Heart left ventricle (tissue), 16 donors: ENCODE measurements at regions of chr7 and their contacts with region 1.

Region 1: GRCh38 chr7:18119985-18120384 is 92.3 kb upstream of the PRPS1L1 start:
- DNase-seq: peak in 1 of 5 donors; percentile 25
- ATAC-seq: peak in 3 of 4 donors; percentile 71 to 76 (median 72)
- H3K4me3 ChIP-seq: no peak overlapping the region
- H3K27ac ChIP-seq: no peak overlapping the region
- H3K4me1 ChIP-seq: peaks cover 0 to 6% (median 0%) of the 10 kb centered on the region in 12 donors
- H3K27me3 ChIP-seq: no peaks in the 10 kb centered on the region
- CTCF ChIP-seq: peak in 10 of 12 donors; percentile 6 to 44 (median 27)
- POLR2A ChIP-seq: no peak

Region 2: DNA sequence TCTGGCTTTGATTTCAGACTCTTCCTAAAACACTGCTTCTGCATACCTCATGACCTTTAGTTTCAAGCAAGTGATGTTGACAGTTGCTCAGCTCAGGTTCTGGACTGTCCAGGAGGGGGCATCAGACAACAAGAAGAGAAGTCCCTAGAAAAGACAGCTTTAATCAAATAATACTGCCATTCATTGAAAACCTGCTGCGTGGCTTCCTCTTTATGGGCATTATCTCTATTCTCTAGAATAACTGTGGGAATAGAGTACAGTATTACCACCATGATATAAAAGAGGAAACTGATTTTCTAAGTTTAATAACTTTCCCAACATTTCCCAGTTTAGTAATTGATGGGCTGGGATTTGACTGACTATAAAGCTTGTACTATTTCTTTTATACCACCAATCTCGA is 350.1 kb before region 1 on chr7:
- intact Hi-C with region 1: loop called in 1 of 10 experiments (anchors 10 kb)
- DNase-seq: peak; percentile 28 to 55 (median 44)
- ATAC-seq: peak in 3 of 4 donors; percentile 57 to 66 (median 58)
- H3K4me3 ChIP-seq: no peak overlapping the region
- H3K27ac ChIP-seq: peak overlapping the region in 1 of 12 donors; percentile 46
- H3K4me1 ChIP-seq: peaks cover 0 to 39% (median 9%) of the 10 kb centered on the region in 12 donors
- H3K27me3 ChIP-seq: no peaks in the 10 kb centered on the region
- CTCF ChIP-seq: peak; percentile 46 to 74 (median 68)
- POLR2A ChIP-seq: no peak

Region 3: GRCh38 chr7:17957871-17958270 is 162.1 kb before region 1 on chr7:
- intact Hi-C with region 1: no loop called
- DNase-seq: no peak
- ATAC-seq: no peak
- H3K4me3 ChIP-seq: no peak overlapping the region
- H3K27ac ChIP-seq: no peak overlapping the region
- H3K4me1 ChIP-seq: no peaks in the 10 kb centered on the region
- H3K27me3 ChIP-seq: no peaks in the 10 kb centered on the region
- CTCF ChIP-seq: no peak
- POLR2A ChIP-seq: no peak

Region 4: GRCh38 chr7:17971411-17971810 is 148.6 kb before region 1 on chr7:
- intact Hi-C with region 1: loop called in 1 of 10 experiments (anchors 10 kb)
- DNase-seq: no peak
- ATAC-seq: no peak
- H3K4me3 ChIP-seq: no peak overlapping the region
- H3K27ac ChIP-seq: no peak overlapping the region
- H3K4me1 ChIP-seq: no peaks in the 10 kb centered on the region
- H3K27me3 ChIP-seq: no peaks in the 10 kb centered on the region
- CTCF ChIP-seq: peak in 8 of 12 donors; percentile 9 to 48 (median 35)
- POLR2A ChIP-seq: no peak

Region 5: GRCh38 chr7:17986851-17987250 is 133.1 kb before region 1 on chr7:
- intact Hi-C with region 1: loop called in 1 of 10 experiments (anchors 10 kb)
- DNase-seq: no peak
- ATAC-seq: peak in 3 of 4 donors; percentile 42 to 63 (median 54)
- H3K4me3 ChIP-seq: no peak overlapping the region
- H3K27ac ChIP-seq: peak overlapping the region in 7 of 12 donors; percentile 9 to 75 (median 51)
- H3K4me1 ChIP-seq: peaks cover 0 to 12% (median 0%) of the 10 kb centered on the region in 12 donors
- H3K27me3 ChIP-seq: no peaks in the 10 kb centered on the region
- CTCF ChIP-seq: no peak
- POLR2A ChIP-seq: no peak